Dorsolateral prefrontal cortex (tissue), 120 donors: ENCODE measurements at regions of chr2 and their contacts with region 1.

Region 1: GRCh38 chr2:85888684-85889626 is at the start of gene ST3GAL5:
- DNase-seq: peak; percentile 87 to 95 (median 93)
- H3K4me3 ChIP-seq: peak within 1 kb of the TSS; percentile 61 to 99 (median 88)
- H3K27ac ChIP-seq: peak within 1 kb of the TSS; percentile 83 to 100 (median 99)
- H3K27me3 ChIP-seq: no peaks in the 10 kb centered on the region
- CTCF ChIP-seq: peak; percentile 30 to 97 (median 78)
- total RNA-seq, gene ST3GAL5: 56.0 to 109 (median 86.7) TPM

Region 2: GRCh38 chr2:85750587-85751575 is 138.1 kb before region 1 on chr2:
- intact Hi-C with region 1: loop called (anchors 5 to 10 kb)
- DNase-seq: peak; percentile 68 to 87 (median 80)
- H3K4me3 ChIP-seq: no peak overlapping the region
- H3K27ac ChIP-seq: peak overlapping the region in 42 of 59 donors; percentile 3 to 87 (median 42)
- H3K27me3 ChIP-seq: peaks cover 0 to 6% (median 0%) of the 10 kb centered on the region in 45 donors
- CTCF ChIP-seq: peak; percentile 38 to 93 (median 85)

Region 3: GRCh38 chr2:85826990-85827878 is 61.7 kb before region 1 on chr2:
- intact Hi-C with region 1: loop called (anchors 2 to 5 kb)
- DNase-seq: peak; percentile 65 to 83 (median 78)
- H3K4me3 ChIP-seq: peak overlapping the region in 53 of 59 donors; percentile 0 to 62 (median 37)
- H3K27ac ChIP-seq: peak overlapping the region in 2 of 59 donors; percentile 23 to 29
- H3K27me3 ChIP-seq: no peaks in the 10 kb centered on the region
- CTCF ChIP-seq: peak; percentile 64 to 99 (median 95)

Region 4: GRCh38 chr2:85902496-85902895 is 13.5 kb after region 1 on chr2:
- intact Hi-C with region 1: loop called in 1 of 2 experiments (anchors 1 kb)
- DNase-seq: peak in 1 of 10 donors; percentile 77
- H3K4me3 ChIP-seq: peak overlapping the region in 31 of 59 donors; percentile 9 to 56 (median 30)
- H3K27ac ChIP-seq: peak overlapping the region; percentile 81 to 100 (median 95)
- H3K27me3 ChIP-seq: no peaks in the 10 kb centered on the region
- CTCF ChIP-seq: peak in 1 of 56 donors; percentile 17

Region 5: GRCh38 chr2:86020984-86021383 is 132.0 kb after region 1 on chr2:
- intact Hi-C with region 1: loop called in 1 of 2 experiments (anchors 5 kb)
- DNase-seq: peak in 9 of 10 donors; percentile 56 to 86 (median 79)
- H3K4me3 ChIP-seq: no peak overlapping the region
- H3K27ac ChIP-seq: peak overlapping the region; percentile 3 to 95 (median 82)
- H3K27me3 ChIP-seq: no peaks in the 10 kb centered on the region
- CTCF ChIP-seq: peak in 3 of 56 donors; percentile 12 to 23 (median 13)

Region 6: GRCh38 chr2:86072271-86072858 is 183.4 kb after region 1 on chr2:
- intact Hi-C with region 1: loop called in 1 of 2 experiments (anchors 2 kb)
- DNase-seq: peak in 4 of 10 donors; percentile 35 to 65 (median 46)
- H3K4me3 ChIP-seq: no peak overlapping the region
- H3K27ac ChIP-seq: peak overlapping the region; percentile 8 to 84 (median 68)
- H3K27me3 ChIP-seq: no peaks in the 10 kb centered on the region
- CTCF ChIP-seq: no peak